Endothelial cell of umbilical vein (primary cell): ENCODE measurements at regions of chr21 and their contacts with region 1.

Region 1: GRCh38 chr21:44480200-44481053 is 25.1 kb downstream of the LRRC3 start:
- DNase-seq: no peak
- H3K4me3 ChIP-seq: no peak overlapping the region
- H3K27ac ChIP-seq: no peak overlapping the region
- H3K4me1 ChIP-seq: no peaks in the 10 kb centered on the region
- H3K27me3 ChIP-seq: no peaks in the 10 kb centered on the region
- CTCF ChIP-seq: no peak
- POLR2A ChIP-seq: no peak

Region 2: GRCh38 chr21:44338971-44339910 is 141.2 kb before region 1 on chr21 and contains the start of gene CFAP410:
- CTCF ChIA-PET with region 1: no interaction called
- POLR2A ChIA-PET with region 1: no interaction called
- dilution Hi-C with region 1: no loop called
- intact Hi-C with region 1: loop called (anchors 1 kb)
- DNase-seq: peak; percentile 96
- H3K4me3 ChIP-seq: peak within 1 kb of the TSS; percentile 63 to 87 (median 82)
- H3K27ac ChIP-seq: peak within 1 kb of the TSS; percentile 92
- H3K4me1 ChIP-seq: peaks cover 14% of the 10 kb centered on the region
- H3K27me3 ChIP-seq: no peaks in the 10 kb centered on the region
- CTCF ChIP-seq: no peak
- POLR2A ChIP-seq: peak; percentile 82
- total RNA-seq, gene CFAP410: 6.3 and 7.2 TPM in 2 replicates